ENCODE measurements at regions of chr9 and their contacts with region 1.

Region 1: DNA sequence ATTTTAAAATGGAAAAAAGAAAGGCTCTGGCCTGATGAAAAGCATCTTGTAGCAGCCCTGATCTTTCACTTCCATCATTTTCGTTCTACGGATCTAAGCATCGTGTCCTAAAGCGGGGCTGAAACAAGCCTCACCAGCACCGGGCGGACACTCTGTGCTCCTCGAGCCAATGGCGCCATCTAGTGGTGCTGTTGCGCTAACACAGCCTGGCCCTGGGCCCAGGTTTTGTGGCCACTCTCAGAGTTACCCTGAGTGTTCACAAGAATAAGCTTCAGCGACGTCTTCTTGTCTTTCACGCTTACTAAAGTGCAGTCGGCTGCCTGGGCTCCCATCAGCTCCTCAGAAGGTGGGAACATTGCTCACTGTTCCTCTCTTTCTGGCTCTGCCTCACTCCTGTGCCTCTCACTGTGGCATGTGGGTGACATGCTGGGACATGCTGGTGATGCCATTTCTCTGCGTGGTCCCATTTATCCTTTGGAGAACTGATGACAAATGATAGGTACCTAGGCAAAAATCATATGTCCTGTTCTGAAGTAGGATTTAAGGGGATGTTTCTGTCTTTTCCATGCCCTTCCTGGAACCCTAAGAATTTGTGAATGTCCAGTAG is 32.7 kb downstream of the DMRT3 start:
- H3K4me3 Mint-ChIP-seq: no peak overlapping the region
- H3K27ac Mint-ChIP-seq: no peak overlapping the region
- H3K4me1 Mint-ChIP-seq: peaks cover 19% of the 10 kb centered on the region
- H3K27me3 Mint-ChIP-seq: peaks cover 2% of the 10 kb centered on the region

Region 2: DNA sequence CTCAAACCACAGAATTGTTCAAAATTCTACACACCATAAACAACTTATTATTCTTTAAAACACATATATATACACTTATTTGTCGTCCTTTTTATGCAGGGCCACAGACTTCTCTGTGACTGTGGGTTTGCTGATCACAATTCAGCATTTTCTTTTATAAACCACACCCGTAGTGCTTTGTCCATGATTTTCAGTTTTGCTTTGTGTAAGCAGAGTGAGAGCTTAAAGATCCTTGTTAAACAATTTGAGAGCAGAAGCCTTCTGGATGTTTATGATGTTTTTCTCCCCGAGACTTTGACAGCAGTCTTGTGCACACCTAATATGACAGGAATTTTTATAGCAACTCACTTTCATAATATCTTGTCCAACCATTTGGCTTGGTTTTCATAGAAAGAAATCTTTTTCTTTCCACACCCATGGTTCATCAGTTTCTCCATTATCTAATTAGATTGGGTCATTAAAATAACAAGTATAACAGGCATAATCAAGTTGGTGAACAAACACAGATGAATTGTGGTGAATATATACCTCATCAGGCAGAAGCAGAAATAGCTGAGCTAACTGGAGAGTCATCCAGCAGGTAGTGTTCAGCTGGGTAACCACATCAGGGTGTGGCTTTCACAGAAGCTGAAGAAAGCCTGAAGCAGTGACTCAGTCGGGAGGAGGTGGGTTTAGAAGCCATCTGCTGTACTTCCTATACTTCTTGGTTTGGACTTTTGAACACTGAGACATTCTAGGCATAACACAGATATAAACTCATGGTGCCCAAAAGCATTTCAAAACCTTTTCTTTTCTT is 561.8 kb before region 1 on chr9:
- intact Hi-C with region 1: loop called (anchors 10 kb)
- H3K4me3 Mint-ChIP-seq: peak overlapping the region; percentile 4
- H3K27ac Mint-ChIP-seq: peak overlapping the region; percentile 58
- H3K4me1 Mint-ChIP-seq: peaks cover 21% of the 10 kb centered on the region
- H3K27me3 Mint-ChIP-seq: no peaks in the 10 kb centered on the region

Region 3: GRCh38 chr9:893843-894420 is 115.3 kb before region 1 on chr9:
- intact Hi-C with region 1: loop called (anchors 1 kb)
- H3K4me3 Mint-ChIP-seq: no peak overlapping the region
- H3K27ac Mint-ChIP-seq: no peak overlapping the region
- H3K4me1 Mint-ChIP-seq: peaks cover 10% of the 10 kb centered on the region
- H3K27me3 Mint-ChIP-seq: peaks cover 8% of the 10 kb centered on the region